Activated B cell treated with CpG ODN at 0.5 μM for 24 hours (primary cell): ENCODE measurements at regions of chr15 and their contacts with region 1.

Region 1: GRCh38 chr15:59399465-59400102 is 26.9 kb upstream of the MYO1E start:
- DNase-seq: peak; percentile 46
- ATAC-seq: peak; percentile 92
- H3K4me3 Mint-ChIP-seq: peak overlapping the region; percentile 78
- H3K27ac Mint-ChIP-seq: peak overlapping the region; percentile 93
- H3K4me1 Mint-ChIP-seq: peaks cover 78% of the 10 kb centered on the region
- H3K27me3 Mint-ChIP-seq: no peaks in the 10 kb centered on the region
- CTCF ChIP-seq: no peak

Region 2: DNA sequence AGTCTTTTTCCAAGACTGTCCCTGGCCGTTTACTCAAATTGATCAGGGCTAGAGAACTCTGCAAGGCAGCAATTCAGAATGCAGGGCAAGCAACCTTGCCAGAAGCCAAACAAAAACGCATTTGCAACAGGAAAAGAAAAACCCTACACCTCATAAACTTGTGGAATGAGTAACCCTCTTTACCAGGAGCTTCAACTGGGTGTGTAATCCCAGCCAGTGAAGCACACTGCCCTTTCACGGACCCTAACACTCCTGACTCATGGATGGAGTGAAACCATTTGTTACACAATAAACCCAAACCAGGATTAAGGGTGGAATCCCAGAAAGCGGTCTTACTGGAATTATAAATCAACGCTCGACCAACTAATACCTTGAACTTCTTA is 207.7 kb before region 1 on chr15:
- CTCF ChIA-PET with region 1: no interaction called
- POLR2A ChIA-PET with region 1: no interaction called
- intact Hi-C with region 1: no loop called
- DNase-seq: no peak
- ATAC-seq: no peak
- H3K4me3 Mint-ChIP-seq: no peak overlapping the region
- H3K27ac Mint-ChIP-seq: no peak overlapping the region
- H3K4me1 Mint-ChIP-seq: no peaks in the 10 kb centered on the region
- H3K27me3 Mint-ChIP-seq: no peaks in the 10 kb centered on the region
- CTCF ChIP-seq: no peak

Region 3: DNA sequence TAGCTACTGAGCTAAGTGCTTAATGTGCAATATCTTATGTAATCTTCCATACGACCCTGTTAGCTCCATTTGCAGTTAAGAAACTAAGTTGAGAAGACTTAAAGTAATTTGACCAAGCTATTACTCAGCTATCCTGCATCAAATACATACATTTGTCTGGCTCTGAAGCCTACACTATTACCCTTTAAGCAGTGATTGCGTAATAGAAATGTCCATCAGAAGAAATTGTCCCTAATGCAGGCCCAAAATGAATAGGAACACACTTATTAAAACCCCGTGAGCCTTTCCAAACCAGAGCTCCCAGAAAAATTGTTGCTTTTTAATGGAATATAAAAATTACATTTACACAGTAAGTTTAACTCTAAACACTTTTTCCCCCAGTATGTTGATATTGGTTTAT is 21.6 kb before region 1 on chr15:
- CTCF ChIA-PET with region 1: interaction called, 11 read pairs
- POLR2A ChIA-PET with region 1: interaction called, 6 read pairs
- intact Hi-C with region 1: no loop called
- DNase-seq: no peak
- ATAC-seq: no peak
- H3K4me3 Mint-ChIP-seq: no peak overlapping the region
- H3K27ac Mint-ChIP-seq: no peak overlapping the region
- H3K4me1 Mint-ChIP-seq: peaks cover 34% of the 10 kb centered on the region
- H3K27me3 Mint-ChIP-seq: no peaks in the 10 kb centered on the region
- CTCF ChIP-seq: no peak

Region 4: GRCh38 chr15:59388670-59389069 is 10.9 kb before region 1 on chr15:
- CTCF ChIA-PET with region 1: no interaction called
- POLR2A ChIA-PET with region 1: interaction called, 10 read pairs
- intact Hi-C with region 1: no loop called
- DNase-seq: no peak
- ATAC-seq: no peak
- H3K4me3 Mint-ChIP-seq: no peak overlapping the region
- H3K27ac Mint-ChIP-seq: no peak overlapping the region
- H3K4me1 Mint-ChIP-seq: peaks cover 16% of the 10 kb centered on the region
- H3K27me3 Mint-ChIP-seq: no peaks in the 10 kb centered on the region
- CTCF ChIP-seq: no peak